GM12878 (cell line): ENCODE measurements at regions of chr18 and their contacts with region 1.

Region 1: DNA sequence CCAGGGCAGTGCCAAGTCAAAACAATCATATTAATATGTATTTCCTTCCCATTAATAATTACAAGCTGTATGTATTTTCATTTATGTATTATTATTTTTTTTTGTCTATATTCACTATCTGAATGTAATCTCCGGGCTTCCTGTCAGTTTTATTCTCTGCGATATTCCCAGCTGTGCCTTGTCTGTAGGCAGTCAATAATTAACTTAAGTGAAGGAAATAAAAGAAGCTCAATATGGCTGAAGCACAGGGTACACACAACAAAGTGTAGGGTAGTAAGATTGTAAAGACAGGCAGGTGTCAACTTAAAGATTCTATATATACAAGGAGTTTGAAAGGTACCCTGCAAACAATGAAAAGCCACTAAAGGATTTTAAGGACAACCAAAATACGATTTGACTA is 122.9 kb downstream of the ROCK1 start:
- DNase-seq: no peak
- ATAC-seq: no peak
- H3K4me3 ChIP-seq: no peak overlapping the region
- H3K27ac ChIP-seq: no peak overlapping the region
- H3K4me1 ChIP-seq: no peaks in the 10 kb centered on the region
- H3K27me3 ChIP-seq: no peaks in the 10 kb centered on the region
- CTCF ChIP-seq: no peak
- EP300 ChIP-seq: no peak
- POLR2A ChIP-seq: no peak
- RAD21 ChIP-seq: no peak

Region 2: DNA sequence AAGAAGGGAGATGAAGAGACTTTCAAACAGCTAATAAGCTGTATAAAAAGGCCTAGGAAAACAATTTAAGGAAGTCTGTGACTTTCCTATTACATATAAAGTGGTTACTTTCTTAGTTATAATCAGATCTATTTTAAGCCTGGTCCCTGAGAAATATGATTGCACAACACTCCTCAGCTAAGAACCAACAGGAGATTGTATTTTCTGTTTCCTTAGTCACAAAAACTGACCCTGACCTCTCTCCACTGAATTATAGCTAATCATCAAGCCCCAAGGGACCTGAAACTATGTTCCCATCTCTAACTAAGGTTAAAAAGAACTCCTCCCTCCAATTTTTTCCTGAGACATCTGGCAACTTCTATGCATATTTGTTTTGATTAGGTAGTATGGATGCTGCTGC is 16.0 kb after region 1 on chr18:
- CTCF ChIA-PET with region 1: interaction called, 4 read pairs
- POLR2A ChIA-PET with region 1: interaction called, 10 read pairs
- RAD21 ChIA-PET with region 1: no interaction called
- SMC1A ChIA-PET with region 1: interaction called, 4 read pairs
- in situ Hi-C with region 1: no loop called
- intact Hi-C with region 1: no loop called
- DNase-seq: no peak
- ATAC-seq: no peak
- H3K4me3 ChIP-seq: no peak overlapping the region
- H3K27ac ChIP-seq: no peak overlapping the region
- H3K4me1 ChIP-seq: no peaks in the 10 kb centered on the region
- H3K27me3 ChIP-seq: no peaks in the 10 kb centered on the region
- CTCF ChIP-seq: no peak
- EP300 ChIP-seq: no peak
- POLR2A ChIP-seq: no peak
- RAD21 ChIP-seq: no peak

Region 3: DNA sequence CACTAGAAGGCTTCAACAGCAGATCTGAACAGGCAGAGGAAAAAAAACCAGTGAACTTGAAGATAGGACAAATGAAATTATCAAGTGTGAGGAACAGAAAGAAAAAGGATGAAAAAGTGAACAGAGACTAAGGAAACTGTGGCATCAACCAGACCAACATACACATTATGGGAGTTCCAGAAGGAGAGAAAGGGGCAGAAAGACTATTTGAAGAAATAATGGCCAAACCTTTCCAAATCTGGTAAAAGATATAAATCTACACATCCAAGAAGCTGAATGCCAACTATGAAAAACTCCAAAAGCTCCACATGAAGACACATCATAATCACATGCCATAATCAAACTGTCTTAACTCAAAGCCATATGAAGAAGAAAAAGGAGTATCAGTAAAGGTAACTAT is 43.1 kb after region 1 on chr18:
- CTCF ChIA-PET with region 1: no interaction called
- POLR2A ChIA-PET with region 1: no interaction called
- RAD21 ChIA-PET with region 1: no interaction called
- SMC1A ChIA-PET with region 1: interaction called, 3 read pairs
- in situ Hi-C with region 1: loop called (anchors 5 kb)
- intact Hi-C with region 1: no loop called
- DNase-seq: no peak
- ATAC-seq: no peak
- H3K4me3 ChIP-seq: no peak overlapping the region
- H3K27ac ChIP-seq: no peak overlapping the region
- H3K4me1 ChIP-seq: no peaks in the 10 kb centered on the region
- H3K27me3 ChIP-seq: no peaks in the 10 kb centered on the region
- CTCF ChIP-seq: no peak
- EP300 ChIP-seq: no peak
- POLR2A ChIP-seq: no peak
- RAD21 ChIP-seq: no peak